Activated B cell treated with CpG ODN at 0.5 μM for 24 hours (primary cell): ENCODE measurements at regions of chr18 and their contacts with region 1.

Region 1: GRCh38 chr18:3481696-3482210 is 31.8 kb downstream of the TGIF1 start:
- DNase-seq: no peak
- ATAC-seq: peak; percentile 71
- H3K4me3 Mint-ChIP-seq: no peak overlapping the region
- H3K27ac Mint-ChIP-seq: no peak overlapping the region
- H3K4me1 Mint-ChIP-seq: no peaks in the 10 kb centered on the region
- H3K27me3 Mint-ChIP-seq: peaks cover 5% of the 10 kb centered on the region
- CTCF ChIP-seq: no peak

Region 2: DNA sequence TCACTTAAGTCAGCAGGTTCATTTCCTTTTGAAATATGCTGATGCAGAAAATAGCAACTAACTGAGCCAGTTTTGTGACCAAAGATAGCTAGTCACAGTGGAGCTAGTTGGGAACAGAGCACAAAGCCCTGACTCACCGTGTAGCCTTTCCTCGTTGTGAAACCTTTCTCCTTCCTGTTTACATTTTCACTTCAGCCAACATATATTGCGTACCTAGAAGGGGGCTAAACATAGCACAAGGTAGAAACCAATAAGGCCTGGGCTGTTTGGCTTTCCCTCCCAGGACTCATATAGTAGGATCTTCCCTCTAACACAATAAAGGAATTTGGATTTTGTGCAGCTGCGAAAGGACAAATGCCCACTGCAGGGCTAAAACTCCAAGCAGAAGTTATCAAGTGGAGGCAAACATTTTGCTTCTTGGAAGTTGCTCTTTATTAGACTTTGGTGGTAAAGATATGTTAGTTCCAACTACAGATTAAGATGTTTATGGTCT is 444.3 kb before region 1 on chr18:
- CTCF ChIA-PET with region 1: no interaction called
- POLR2A ChIA-PET with region 1: no interaction called
- intact Hi-C with region 1: no loop called
- DNase-seq: no peak
- ATAC-seq: no peak
- H3K4me3 Mint-ChIP-seq: no peak overlapping the region
- H3K27ac Mint-ChIP-seq: no peak overlapping the region
- H3K4me1 Mint-ChIP-seq: peaks cover 6% of the 10 kb centered on the region
- H3K27me3 Mint-ChIP-seq: no peaks in the 10 kb centered on the region
- CTCF ChIP-seq: no peak

Region 3: DNA sequence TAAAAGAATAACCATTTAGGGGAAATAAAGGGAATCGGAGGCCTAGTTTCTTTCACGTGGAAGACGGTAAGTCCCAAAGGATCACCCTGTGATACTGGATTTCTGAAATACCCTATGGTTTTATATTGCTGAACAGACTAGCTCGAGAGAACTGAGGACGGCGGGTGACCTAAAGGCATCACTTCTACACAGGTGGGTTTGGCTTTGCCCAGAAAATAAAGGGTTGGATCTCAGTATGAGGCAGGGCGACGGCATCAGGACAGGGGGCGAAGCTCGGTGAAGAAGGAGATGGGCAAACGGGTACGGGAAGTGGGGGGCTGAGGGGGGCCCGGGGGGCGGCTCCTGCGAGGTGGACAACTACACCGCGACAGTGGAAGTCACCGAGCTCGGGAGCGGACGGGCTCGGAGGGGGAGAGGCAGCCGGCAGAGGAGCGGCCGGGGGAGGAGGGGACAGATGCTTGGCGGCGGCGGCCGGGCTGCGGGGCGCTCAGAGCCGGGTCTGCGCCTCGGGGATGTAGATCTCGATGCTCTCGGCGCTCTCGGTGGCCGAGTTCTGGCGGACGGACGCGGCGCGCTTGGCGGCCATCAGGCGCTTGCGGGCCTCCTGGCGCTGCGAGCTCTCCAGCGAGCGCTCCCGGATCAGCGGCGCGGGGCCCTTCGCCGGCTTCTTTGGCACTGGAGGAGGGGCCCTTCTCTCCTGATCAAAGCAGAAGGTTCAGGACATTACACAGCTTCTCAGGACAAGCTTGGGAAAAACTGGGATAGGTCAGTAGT is 17.1 kb after region 1 on chr18:
- CTCF ChIA-PET with region 1: interaction called, 3 read pairs
- POLR2A ChIA-PET with region 1: interaction called, 4 read pairs
- intact Hi-C with region 1: loop called (anchors 2 kb)
- DNase-seq: peak; percentile 33
- ATAC-seq: peak; percentile 70
- H3K4me3 Mint-ChIP-seq: peak overlapping the region; percentile 80
- H3K27ac Mint-ChIP-seq: peak overlapping the region; percentile 25
- H3K4me1 Mint-ChIP-seq: peaks cover 32% of the 10 kb centered on the region
- H3K27me3 Mint-ChIP-seq: peaks cover 14% of the 10 kb centered on the region
- CTCF ChIP-seq: no peak